OCI-LY7 (cell line): ENCODE measurements at regions of chr15 and their contacts with region 1.

Region 1: DNA sequence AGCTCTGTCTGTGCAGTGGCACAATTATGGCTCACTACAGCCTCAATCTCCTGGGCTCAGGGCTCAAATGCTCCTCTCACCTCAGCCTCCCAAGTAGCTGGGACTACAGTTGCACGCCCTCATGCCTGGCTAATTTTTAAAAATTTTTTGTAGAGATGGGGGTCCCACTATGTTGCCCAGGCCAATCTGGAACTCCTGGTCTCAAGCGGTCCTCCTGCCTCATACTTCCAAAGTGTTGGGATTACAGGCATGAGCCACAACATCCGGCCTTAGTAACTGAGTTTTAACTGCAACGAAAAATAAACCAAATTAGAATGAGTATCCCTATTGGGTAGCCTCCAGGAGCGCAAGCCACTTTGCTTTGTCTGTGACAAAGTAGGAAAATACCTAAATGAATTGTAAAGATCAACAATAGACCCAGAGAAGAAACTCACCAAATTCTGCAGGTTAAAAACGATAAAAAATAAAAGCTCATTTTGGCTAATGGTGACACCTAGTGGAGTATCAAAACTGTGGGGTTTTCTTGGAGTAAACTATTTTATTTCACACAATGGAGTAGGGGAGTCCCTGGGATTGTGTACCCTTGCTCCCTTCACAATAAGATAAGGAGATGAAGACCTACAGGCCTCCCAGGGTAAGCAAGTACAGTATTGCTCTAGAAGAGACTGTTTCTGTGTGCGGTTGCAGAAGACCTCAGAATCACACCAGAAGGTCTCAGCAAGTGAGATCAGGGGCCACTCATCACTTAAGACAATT is 21.0 kb upstream of the CA12 start:
- DNase-seq: peak; percentile 50
- H3K4me3 ChIP-seq: no peak overlapping the region
- H3K27ac ChIP-seq: no peak overlapping the region
- H3K4me1 ChIP-seq: no peaks in the 10 kb centered on the region
- CTCF ChIP-seq: peak; percentile 84

Region 2: DNA sequence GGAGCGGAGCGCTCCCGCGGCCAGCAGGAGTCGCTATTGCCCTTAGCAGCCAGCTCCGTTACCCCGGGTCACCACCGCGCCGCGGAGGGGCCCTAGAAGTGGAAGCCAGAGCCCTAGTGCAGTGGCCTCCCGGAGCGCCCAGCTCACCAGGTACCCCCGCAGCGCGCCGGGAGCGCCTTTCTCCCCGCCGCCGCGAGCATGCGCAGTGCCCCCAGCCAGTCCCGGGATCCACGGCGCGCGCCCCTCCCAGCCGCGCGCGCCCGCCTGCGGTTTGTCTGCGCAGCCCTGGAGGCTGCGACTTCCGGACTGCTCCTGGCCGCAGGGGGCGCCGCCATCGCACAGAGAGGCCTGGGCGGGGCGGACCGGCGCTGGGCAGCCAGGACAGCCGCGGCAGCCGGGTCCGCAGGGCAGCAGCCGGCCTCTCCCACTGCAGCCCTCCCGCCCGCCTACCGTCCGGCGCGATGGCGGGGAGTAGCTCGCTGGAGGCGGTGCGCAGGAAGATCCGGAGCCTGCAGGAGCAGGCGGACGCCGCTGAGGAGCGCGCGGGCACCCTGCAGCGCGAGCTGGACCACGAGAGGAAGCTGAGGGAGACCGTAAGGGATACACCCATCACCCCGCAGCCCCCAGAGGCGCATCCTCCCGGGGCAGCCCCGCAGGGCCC is 354.4 kb before region 1 on chr15:
- CTCF ChIA-PET with region 1: no interaction called
- POLR2A ChIA-PET with region 1: no interaction called
- intact Hi-C with region 1: loop called (anchors 10 kb)
- DNase-seq: peak; percentile 88
- H3K4me3 ChIP-seq: peak overlapping the region; percentile 89
- H3K27ac ChIP-seq: no peak overlapping the region
- H3K4me1 ChIP-seq: peaks cover 20% of the 10 kb centered on the region
- CTCF ChIP-seq: peak; percentile 94

Region 3: GRCh38 chr15:63157118-63157843 is 245.4 kb before region 1 on chr15 and contains the start of gene RPS27L:
- CTCF ChIA-PET with region 1: no interaction called
- POLR2A ChIA-PET with region 1: no interaction called
- intact Hi-C with region 1: loop called (anchors 10 kb)
- DNase-seq: peak; percentile 93
- H3K4me3 ChIP-seq: peak within 1 kb of the TSS; percentile 86
- H3K27ac ChIP-seq: peak within 1 kb of the TSS; percentile 67
- H3K4me1 ChIP-seq: peaks cover 17% of the 10 kb centered on the region
- CTCF ChIP-seq: no peak
- total RNA-seq, gene RPS27L: 41.3 and 55.5 TPM in 2 replicates

Region 4: GRCh38 chr15:63288778-63289378 is 113.8 kb before region 1 on chr15:
- CTCF ChIA-PET with region 1: no interaction called
- POLR2A ChIA-PET with region 1: no interaction called
- intact Hi-C with region 1: loop called (anchors 5 kb)
- DNase-seq: peak; percentile 59
- H3K4me3 ChIP-seq: no peak overlapping the region
- H3K27ac ChIP-seq: no peak overlapping the region
- H3K4me1 ChIP-seq: no peaks in the 10 kb centered on the region
- CTCF ChIP-seq: peak; percentile 94

Region 5: DNA sequence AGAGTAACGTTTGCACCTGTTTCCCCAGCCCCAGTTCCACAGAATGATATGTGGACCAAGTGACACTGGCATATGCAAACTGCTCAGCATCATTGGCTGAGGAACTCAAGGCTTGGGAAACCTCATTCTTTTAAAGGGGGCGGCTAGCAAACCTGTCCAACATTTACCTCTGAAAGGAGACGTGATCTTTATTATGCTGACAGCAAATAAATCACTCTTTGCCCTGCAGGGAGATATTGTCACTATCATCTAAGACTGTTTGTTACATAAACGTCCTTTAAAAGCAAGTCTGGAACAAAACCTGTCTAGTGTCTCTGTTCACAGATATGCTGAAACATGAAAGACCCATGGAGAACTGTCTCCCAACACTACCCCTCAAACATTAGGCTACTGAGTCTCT is 42.5 kb before region 1 on chr15:
- CTCF ChIA-PET with region 1: no interaction called
- POLR2A ChIA-PET with region 1: no interaction called
- intact Hi-C with region 1: no loop called
- DNase-seq: no peak
- H3K4me3 ChIP-seq: no peak overlapping the region
- H3K27ac ChIP-seq: no peak overlapping the region
- H3K4me1 ChIP-seq: no peaks in the 10 kb centered on the region
- CTCF ChIP-seq: no peak